Lower leg skin (tissue), 4 donors: ENCODE measurements at regions of chr10 and their contacts with region 1.

Region 1: DNA sequence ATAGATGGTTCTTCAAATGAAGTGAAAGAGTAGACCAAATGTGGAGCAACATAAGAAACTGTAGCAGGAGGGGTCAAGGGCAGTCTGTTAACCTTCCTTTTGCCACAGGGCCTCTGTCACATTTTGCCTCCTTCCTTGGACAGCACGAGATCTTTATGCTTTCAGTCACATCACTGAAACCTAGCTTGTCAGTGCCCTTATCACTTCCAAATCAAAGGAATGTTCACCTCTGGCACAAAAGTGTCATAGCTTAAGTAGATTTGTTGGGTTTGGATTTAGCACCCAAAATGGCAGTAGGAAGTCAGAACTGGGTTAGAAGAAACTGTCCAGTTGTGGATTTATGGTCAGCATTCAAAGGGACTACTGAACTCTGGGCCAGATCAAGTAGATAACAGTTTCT is 22.8 kb downstream of the TFAM start:
- DNase-seq: no peak
- H3K4me3 ChIP-seq: no peak overlapping the region
- CTCF ChIP-seq: no peak
- POLR2A ChIP-seq: no peak

Region 2: DNA sequence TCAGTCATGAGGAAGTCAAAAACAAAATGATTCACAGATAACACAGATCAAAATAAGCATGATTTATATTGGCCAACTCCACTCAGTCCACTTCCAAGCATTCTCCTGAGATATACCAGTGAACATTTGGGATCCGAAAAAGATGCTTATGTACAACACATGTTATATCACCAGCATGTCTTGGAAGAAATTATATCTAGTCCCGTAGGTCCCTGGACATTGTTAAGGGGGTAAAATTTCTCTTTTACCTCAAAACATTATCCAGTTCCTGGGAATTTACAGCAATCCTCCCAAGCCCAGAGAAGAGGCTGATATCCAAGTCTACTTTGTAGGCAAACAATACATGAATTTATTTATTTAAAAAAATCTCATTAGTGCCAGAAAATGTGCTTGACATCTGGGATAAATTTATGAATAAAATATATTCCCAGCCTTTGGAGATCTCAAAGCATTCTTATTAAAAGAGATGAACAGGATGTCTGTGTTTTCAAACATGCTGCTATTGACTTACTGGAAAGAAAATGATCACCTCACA is 1464.7 kb before region 1 on chr10:
- intact Hi-C with region 1: loop called (anchors 5 kb)
- DNase-seq: no peak
- H3K4me3 ChIP-seq: no peak overlapping the region
- CTCF ChIP-seq: no peak
- POLR2A ChIP-seq: no peak